Body of pancreas (tissue), 4 donors: ENCODE measurements at regions of chr5 and their contacts with region 1.

Region 1: DNA sequence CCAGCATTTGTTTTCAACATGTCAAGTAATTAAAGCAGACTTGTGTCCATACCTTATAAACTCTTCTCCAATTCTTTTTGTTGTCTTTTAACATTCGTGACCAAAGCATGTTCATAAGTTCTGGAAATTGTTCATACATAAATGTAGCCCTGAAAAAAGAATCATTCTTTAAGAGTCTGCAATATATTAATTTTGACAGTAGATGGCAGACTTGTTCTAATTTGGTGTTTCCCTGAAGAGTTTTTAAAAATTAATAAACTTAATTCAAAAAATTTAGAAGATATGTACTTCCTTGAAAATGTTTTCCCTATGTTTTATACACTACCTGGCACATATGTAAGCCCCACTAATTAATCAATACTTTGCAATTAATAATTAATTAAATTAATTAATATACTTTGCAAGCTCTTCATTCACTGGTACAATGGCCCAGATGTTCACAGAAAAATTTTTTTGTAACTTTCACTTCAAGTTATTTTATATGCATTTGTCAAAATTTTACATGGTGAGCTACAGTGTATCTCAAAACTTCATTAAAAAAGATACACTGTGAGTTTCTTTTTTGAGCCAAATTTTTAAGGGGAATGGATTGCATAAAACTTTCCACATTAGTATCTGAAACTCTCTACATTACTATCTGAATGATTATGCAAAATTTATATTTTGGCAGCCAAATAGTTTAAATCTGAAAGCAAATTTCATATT is 42.1 kb downstream of the CLINT1 start:
- DNase-seq: no peak
- ATAC-seq: no peak
- H3K4me3 ChIP-seq: no peak overlapping the region
- H3K27ac ChIP-seq: no peak overlapping the region
- H3K4me1 ChIP-seq: peaks cover 31% of the 10 kb centered on the region
- H3K27me3 ChIP-seq: no peaks in the 10 kb centered on the region
- CTCF ChIP-seq: peak; percentile 15 to 74 (median 59)
- POLR2A ChIP-seq: no peak

Region 2: GRCh38 chr5:157366741-157367674 is 449.8 kb before region 1 on chr5:
- intact Hi-C with region 1: no loop called
- DNase-seq: no peak
- ATAC-seq: no peak
- H3K4me3 ChIP-seq: no peak overlapping the region
- H3K27ac ChIP-seq: no peak overlapping the region
- H3K4me1 ChIP-seq: no peaks in the 10 kb centered on the region
- H3K27me3 ChIP-seq: no peaks in the 10 kb centered on the region
- CTCF ChIP-seq: no peak
- POLR2A ChIP-seq: no peak

Region 3: DNA sequence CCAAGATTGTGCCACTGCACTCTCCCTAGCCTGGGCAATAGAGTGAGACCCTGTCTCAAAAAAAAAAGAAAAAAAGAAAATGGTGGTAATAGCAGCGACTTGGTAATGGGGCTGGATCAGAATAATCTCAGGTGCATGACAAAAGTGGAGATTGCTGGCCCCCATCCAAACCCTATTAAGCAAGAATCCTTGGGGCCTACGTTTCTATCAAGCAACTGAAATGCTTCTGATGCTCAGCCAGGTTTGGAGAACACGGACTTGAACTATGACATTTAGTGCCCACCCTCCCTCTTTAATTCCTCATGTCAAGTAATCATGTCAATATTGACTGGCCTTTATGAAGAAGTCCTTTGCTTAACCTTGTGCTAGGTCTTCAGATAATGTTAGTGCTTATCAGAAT is 138.9 kb before region 1 on chr5:
- intact Hi-C with region 1: no loop called
- DNase-seq: no peak
- ATAC-seq: no peak
- H3K4me3 ChIP-seq: no peak overlapping the region
- H3K27ac ChIP-seq: no peak overlapping the region
- H3K4me1 ChIP-seq: no peaks in the 10 kb centered on the region
- H3K27me3 ChIP-seq: no peaks in the 10 kb centered on the region
- CTCF ChIP-seq: no peak
- POLR2A ChIP-seq: no peak

Region 4: GRCh38 chr5:157778121-157778805 is 38.6 kb before region 1 on chr5:
- intact Hi-C with region 1: no loop called
- DNase-seq: peak in 3 of 4 donors; percentile 4 to 21 (median 19)
- ATAC-seq: no peak
- H3K4me3 ChIP-seq: no peak overlapping the region
- H3K27ac ChIP-seq: no peak overlapping the region
- H3K4me1 ChIP-seq: no peaks in the 10 kb centered on the region
- H3K27me3 ChIP-seq: no peaks in the 10 kb centered on the region
- CTCF ChIP-seq: no peak
- POLR2A ChIP-seq: no peak

Region 5: GRCh38 chr5:157842787-157843186 is 26.0 kb after region 1 on chr5:
- intact Hi-C with region 1: no loop called
- DNase-seq: no peak
- ATAC-seq: peak; percentile 42
- H3K4me3 ChIP-seq: no peak overlapping the region
- H3K27ac ChIP-seq: peak overlapping the region in 1 of 4 donors; percentile 49
- H3K4me1 ChIP-seq: peaks cover 43% of the 10 kb centered on the region
- H3K27me3 ChIP-seq: no peaks in the 10 kb centered on the region
- CTCF ChIP-seq: no peak
- POLR2A ChIP-seq: no peak

Region 6: GRCh38 chr5:157956271-157956885 is 139.5 kb after region 1 on chr5:
- intact Hi-C with region 1: loop called (anchors 10 kb)
- DNase-seq: no peak
- ATAC-seq: no peak
- H3K4me3 ChIP-seq: no peak overlapping the region
- H3K27ac ChIP-seq: no peak overlapping the region
- H3K4me1 ChIP-seq: no peaks in the 10 kb centered on the region
- H3K27me3 ChIP-seq: no peaks in the 10 kb centered on the region
- CTCF ChIP-seq: no peak
- POLR2A ChIP-seq: no peak